AG04449 (cell line): ENCODE measurements at regions of chr15 and their contacts with region 1.

Region 1: GRCh38 chr15:88454867-88455810 is 12.0 kb downstream of the MRPL46 start:
- DNase-seq: peak; percentile 17
- H3K4me3 ChIP-seq: no peak overlapping the region
- CTCF ChIP-seq: peak; percentile 91

Region 2: DNA sequence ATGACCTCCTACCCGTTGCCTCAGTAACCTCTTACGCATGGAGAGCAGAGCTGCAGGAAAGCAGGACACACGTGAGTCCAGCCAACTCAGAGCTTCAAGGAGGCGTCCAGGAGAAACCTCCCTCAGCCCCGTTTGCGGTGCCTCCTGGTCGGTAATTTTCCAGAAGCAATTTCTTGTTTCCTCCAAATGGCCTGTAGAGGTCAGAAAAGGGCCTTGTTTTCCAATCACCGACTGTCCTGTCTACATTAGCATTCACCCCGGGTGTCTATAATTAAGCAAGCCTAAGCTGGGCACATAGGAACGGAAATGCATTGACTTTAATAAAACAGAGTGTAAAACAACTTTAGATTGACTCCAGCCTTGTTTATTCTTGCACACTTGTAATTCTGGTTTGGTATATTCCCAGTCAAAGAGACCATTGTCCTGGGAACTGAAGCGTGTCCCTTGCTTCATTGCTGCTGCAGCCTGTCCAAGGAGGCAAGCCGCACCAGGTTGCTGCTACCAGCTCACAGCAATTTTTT is 1539.3 kb before region 1 on chr15:
- CTCF ChIA-PET with region 1: interaction called, 11 read pairs
- POLR2A ChIA-PET with region 1: no interaction called
- DNase-seq: peak; percentile 9
- H3K4me3 ChIP-seq: no peak overlapping the region
- CTCF ChIP-seq: peak; percentile 36

Region 3: GRCh38 chr15:88049506-88049905 is 405.6 kb before region 1 on chr15:
- CTCF ChIA-PET with region 1: no interaction called
- POLR2A ChIA-PET with region 1: no interaction called
- DNase-seq: no peak
- H3K4me3 ChIP-seq: no peak overlapping the region
- CTCF ChIP-seq: no peak

Region 4: DNA sequence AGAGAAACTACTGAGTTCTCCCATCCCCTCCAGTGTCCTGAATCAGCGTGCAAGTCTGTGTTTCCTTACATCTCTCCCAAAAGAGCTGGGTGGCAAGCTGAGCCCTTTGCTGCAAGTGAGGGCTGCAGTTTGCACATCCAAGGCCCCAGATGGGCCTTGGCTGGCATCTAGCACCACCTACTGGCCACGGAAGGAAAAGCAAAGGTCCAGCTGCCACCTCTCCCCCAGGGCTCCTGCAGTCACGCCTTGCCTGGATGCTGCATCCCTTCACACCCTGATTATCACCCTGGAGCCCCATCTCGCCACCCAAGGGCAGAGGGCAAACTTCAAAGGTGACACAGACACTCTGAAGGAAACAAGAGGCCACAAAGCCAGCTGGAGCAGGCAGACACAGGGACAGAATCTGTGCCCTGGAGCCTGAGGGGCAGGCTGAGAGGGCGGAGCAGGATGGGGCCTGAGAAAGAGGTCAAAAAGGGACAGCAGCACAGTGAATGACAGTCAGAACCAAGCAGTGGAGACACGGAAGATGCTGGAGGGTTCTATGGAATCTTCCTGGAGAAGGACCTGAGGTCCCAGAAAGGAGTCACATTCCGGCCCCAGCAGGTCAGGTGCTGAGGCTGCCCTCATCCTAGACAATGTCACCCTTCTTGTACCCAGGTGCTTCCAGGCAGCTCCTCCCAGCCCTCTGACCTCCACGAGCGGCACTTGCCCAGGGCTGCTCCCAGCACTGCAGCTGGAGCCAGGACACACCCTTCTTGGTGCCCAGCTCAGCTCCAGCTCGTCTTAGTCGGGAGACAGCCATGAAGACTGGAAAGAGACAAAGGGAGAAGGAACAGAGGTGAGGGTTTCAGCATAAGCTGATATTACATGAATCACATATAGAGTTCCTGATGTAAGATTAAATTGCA is 180.3 kb before region 1 on chr15:
- CTCF ChIA-PET with region 1: interaction called, 112 read pairs
- POLR2A ChIA-PET with region 1: no interaction called
- DNase-seq: no peak
- H3K4me3 ChIP-seq: no peak overlapping the region
- CTCF ChIP-seq: peak; percentile 91

Region 5: DNA sequence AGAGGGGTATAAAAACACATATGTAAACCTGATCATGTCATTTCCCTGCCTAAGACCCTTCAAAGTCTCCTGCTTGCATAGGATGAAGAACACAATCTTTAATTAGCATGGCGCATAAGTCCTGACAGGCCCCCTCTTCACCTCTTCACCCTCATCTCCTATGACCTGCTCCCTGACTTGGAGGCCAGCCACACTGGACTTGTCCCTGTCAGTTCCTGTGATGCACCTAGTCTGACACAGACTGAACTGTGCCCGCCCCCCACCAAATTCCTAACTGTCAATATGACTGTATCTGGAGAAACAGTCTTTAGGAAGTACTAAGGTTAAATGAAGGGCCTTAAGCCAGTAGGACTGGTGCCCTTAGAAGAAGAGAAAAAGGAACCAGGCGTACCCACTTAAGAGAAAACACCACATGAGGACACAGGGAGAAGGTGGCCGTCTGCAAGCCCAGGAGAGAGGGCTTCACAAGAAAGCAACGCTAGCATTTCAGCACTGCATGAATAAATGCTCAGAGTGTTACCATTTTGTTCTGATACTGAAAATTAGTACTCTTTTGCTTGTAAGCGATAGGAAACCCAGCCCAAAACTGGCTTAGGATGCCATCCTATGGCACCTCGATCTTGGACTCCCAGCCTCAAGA is 22.0 kb before region 1 on chr15:
- CTCF ChIA-PET with region 1: interaction called, 23 read pairs
- POLR2A ChIA-PET with region 1: no interaction called
- DNase-seq: no peak
- H3K4me3 ChIP-seq: no peak overlapping the region
- CTCF ChIP-seq: no peak

Region 6: DNA sequence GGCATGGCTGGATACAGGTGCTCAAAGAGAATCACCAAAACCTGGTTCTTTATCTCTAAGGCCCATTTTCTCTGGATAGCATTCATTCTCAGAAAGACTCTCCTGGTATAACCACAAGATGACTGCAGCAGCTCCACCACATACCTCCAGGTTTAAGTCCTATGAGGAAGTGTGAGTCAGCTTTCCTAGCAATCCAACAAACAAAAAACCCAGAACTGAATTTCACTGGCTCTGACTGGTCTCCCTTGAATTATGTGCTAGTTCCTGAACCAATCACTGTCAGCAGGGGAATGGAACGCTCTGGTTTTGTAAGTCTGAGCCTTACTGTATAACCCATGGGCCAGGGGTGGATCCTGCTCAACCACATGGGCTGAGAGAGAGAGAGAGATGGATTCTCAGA is 15.1 kb before region 1 on chr15:
- CTCF ChIA-PET with region 1: interaction called, 73 read pairs
- POLR2A ChIA-PET with region 1: no interaction called
- DNase-seq: peak; percentile 42
- H3K4me3 ChIP-seq: no peak overlapping the region
- CTCF ChIP-seq: no peak

Region 7: DNA sequence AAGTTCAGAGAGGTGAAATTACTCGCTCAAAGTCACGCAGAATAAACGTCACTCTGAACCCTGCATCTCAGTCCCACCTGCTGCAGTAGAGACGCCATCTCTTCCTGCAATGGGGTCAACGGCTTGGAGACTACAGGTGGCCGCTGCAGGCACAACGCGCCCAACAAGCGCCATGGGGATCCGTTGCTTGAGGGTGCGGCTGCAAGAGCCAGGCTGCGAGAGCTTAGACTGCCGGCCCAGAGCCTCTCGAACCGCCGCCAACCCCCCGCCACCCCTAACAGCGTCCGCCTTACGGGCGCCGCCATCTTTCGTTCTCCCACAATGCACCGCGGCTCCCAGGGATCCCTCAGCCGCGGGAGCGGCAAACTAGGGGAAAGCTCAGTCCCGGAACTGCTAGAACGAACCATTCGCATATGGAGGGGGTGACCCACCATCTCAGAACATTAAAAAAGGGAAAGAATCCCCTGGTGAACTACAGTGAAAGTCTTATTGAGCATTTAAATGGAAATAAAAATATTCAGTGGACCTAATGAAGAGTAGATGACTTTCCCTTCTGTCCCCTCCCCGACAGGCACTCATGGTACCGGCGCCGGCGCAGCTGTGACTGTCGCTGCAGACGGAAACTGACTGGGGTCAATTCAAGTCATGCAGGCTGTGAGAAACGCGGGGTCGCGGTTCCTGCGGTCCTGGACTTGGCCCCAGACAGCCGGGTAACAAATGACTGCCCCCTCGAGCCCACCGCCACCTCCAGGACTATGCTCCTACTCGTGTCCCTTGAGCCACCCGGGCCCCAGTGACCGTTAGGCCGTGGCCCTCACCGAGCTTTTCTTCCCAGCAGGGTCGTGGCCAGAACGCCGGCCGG is 12.2 kb after region 1 on chr15 and contains the starts of genes MRPL46 and MRPS11:
- CTCF ChIA-PET with region 1: interaction called, 29 read pairs
- POLR2A ChIA-PET with region 1: interaction called, 4 read pairs
- DNase-seq: peak; percentile 14
- H3K4me3 ChIP-seq: peak within 1 kb of the TSS; percentile 99
- CTCF ChIP-seq: no peak